HepG2 (cell line): ENCODE measurements at regions of chr4 and their contacts with region 1.

Region 1: DNA sequence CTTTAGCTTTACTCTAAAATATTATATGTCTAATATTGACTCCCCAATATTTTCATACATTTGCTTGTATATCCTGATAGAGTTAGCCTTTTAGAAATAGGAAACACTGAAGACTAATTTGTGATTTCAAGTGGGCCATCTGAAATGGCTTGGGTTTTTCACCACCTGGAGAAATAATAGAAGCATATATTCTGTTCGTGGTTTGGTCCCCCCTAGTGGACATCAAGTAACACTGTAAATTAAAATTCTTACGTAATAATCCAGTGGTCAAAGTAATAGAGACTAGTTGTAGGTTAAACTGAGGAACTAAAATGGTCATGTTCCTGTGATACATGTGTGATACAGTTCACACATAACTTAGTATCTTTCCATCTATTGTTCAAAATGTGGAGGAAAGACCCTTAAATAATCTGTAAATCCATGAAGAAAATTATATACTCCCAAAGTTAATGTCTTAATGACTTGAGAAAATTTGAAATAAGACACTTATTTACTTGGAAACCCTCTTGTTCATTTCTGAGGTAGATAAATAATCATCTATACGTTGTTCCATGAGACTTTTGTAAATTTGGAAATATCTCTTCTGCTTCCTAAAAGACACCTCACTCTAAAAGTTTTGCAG is 79.8 kb upstream of the SMARCAD1 start:
- DNase-seq: peak; percentile 30
- ATAC-seq: no peak
- H3K4me3 ChIP-seq: no peak overlapping the region
- H3K27ac ChIP-seq: no peak overlapping the region
- H3K4me1 ChIP-seq: no peaks in the 10 kb centered on the region
- H3K27me3 ChIP-seq: no peaks in the 10 kb centered on the region
- CTCF ChIP-seq: peak; percentile 31
- EP300 ChIP-seq: no peak
- POLR2A ChIP-seq: no peak
- RAD21 ChIP-seq: no peak

Region 2: GRCh38 chr4:94063084-94063483 is 64.7 kb before region 1 on chr4:
- CTCF ChIA-PET with region 1: no interaction called
- POLR2A ChIA-PET with region 1: no interaction called
- in situ Hi-C with region 1: no loop called
- intact Hi-C with region 1: no loop called
- DNase-seq: no peak
- ATAC-seq: no peak
- H3K4me3 ChIP-seq: no peak overlapping the region
- H3K27ac ChIP-seq: no peak overlapping the region
- H3K4me1 ChIP-seq: no peaks in the 10 kb centered on the region
- H3K27me3 ChIP-seq: no peaks in the 10 kb centered on the region
- CTCF ChIP-seq: no peak
- EP300 ChIP-seq: no peak
- POLR2A ChIP-seq: no peak
- RAD21 ChIP-seq: no peak

Region 3: GRCh38 chr4:94256828-94257227 is 129.0 kb after region 1 on chr4:
- CTCF ChIA-PET with region 1: no interaction called
- POLR2A ChIA-PET with region 1: no interaction called
- in situ Hi-C with region 1: no loop called
- intact Hi-C with region 1: loop called (anchors 1 kb)
- DNase-seq: peak; percentile 2
- ATAC-seq: 0 out of 3 replicates have a peak, but pooled peaks have one; percentile 36
- H3K4me3 ChIP-seq: no peak overlapping the region
- H3K27ac ChIP-seq: no peak overlapping the region
- H3K4me1 ChIP-seq: no peaks in the 10 kb centered on the region
- H3K27me3 ChIP-seq: no peaks in the 10 kb centered on the region
- CTCF ChIP-seq: peak; percentile 36; the same call in 1 of the 2 replicates
- EP300 ChIP-seq: no peak
- POLR2A ChIP-seq: no peak
- RAD21 ChIP-seq: no peak